AG04450 (cell line): ENCODE measurements at regions of chr10 and their contacts with region 1.

Region 1: DNA sequence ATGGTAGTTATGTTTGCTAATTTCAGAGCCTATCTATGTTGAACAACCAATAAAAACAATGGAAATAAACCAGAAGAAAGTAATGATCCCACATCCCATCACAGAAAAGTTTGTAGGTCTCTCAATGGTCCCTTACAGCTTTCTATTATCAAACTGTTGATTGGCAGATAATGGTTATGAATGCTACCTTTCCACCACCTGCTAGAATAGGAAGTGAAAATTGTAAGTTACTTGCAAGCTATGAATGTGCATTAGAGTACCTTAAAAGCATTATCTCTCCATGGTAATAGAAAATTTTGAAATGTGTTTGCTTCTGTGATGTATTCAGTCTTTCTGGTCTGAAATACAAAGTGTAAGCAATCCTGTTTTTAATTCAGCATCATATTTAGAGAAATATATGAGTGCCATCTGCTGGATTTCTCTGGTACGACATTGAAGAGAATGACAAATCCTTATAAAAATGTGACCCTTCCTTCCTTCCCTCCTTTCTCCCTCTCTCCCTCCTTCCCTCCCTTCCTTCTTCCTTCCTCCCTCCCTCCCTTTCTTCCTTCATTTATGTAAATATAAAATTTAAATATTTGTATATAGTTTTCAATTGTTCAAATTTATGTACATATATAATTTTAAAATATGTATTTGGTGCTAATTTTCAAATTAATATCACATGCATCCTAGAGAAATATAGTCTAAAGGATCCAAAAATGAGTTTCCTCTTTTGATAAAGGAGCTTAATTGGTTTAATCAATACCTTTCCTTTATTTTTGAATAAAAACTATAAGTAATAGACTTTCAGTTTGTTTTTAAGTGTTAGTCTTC is 41.4 kb upstream of the PNLIPRP3 start:
- DNase-seq: no peak
- H3K4me3 ChIP-seq: no peak overlapping the region
- H3K27ac ChIP-seq: no peak overlapping the region
- H3K27me3 ChIP-seq: no peaks in the 10 kb centered on the region
- CTCF ChIP-seq: peak; percentile 58

Region 2: GRCh38 chr10:115432188-115432775 is 953.9 kb before region 1 on chr10:
- CTCF ChIA-PET with region 1: interaction called, 27 read pairs
- POLR2A ChIA-PET with region 1: no interaction called
- DNase-seq: no peak
- H3K4me3 ChIP-seq: no peak overlapping the region
- H3K27ac ChIP-seq: no peak overlapping the region
- H3K27me3 ChIP-seq: no peaks in the 10 kb centered on the region
- CTCF ChIP-seq: peak; percentile 37

Region 3: DNA sequence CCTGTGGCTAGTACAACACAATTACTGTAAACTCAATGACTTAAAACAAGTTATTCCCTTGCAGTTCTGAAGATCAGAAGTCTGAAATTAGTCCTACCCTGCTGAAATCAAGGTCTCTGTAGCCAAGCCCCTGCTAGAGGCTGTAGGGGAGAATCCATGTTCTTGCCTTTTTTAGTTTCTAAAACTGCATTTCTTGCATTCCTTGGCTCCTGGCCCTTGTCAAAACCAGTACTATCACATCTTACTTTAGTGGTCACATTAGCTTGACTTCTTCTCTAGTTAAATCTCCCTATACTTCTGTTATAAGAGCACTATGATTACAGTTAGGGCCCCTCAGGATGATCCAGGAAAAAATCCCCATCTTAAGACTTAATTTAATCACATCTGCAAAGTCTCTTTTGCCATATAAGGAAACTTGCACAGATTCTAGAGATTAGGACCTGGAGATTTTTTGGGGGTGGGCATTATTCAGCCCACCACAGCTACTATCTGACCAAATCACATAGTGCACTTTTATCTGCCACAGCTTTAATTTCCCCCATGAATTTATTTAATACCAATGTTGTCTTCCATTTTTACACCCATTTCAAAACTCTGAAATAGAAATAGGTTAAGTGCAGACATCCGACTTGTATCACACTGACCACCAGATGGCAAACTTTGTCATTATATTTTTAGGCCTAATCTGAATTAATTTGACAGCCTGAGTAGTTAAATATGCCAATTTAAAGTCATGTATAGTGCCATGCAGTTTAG is 680.0 kb before region 1 on chr10:
- CTCF ChIA-PET with region 1: interaction called, 63 read pairs
- POLR2A ChIA-PET with region 1: no interaction called
- DNase-seq: no peak
- H3K4me3 ChIP-seq: no peak overlapping the region
- H3K27ac ChIP-seq: no peak overlapping the region
- H3K27me3 ChIP-seq: no peaks in the 10 kb centered on the region
- CTCF ChIP-seq: peak; percentile 57

Region 4: DNA sequence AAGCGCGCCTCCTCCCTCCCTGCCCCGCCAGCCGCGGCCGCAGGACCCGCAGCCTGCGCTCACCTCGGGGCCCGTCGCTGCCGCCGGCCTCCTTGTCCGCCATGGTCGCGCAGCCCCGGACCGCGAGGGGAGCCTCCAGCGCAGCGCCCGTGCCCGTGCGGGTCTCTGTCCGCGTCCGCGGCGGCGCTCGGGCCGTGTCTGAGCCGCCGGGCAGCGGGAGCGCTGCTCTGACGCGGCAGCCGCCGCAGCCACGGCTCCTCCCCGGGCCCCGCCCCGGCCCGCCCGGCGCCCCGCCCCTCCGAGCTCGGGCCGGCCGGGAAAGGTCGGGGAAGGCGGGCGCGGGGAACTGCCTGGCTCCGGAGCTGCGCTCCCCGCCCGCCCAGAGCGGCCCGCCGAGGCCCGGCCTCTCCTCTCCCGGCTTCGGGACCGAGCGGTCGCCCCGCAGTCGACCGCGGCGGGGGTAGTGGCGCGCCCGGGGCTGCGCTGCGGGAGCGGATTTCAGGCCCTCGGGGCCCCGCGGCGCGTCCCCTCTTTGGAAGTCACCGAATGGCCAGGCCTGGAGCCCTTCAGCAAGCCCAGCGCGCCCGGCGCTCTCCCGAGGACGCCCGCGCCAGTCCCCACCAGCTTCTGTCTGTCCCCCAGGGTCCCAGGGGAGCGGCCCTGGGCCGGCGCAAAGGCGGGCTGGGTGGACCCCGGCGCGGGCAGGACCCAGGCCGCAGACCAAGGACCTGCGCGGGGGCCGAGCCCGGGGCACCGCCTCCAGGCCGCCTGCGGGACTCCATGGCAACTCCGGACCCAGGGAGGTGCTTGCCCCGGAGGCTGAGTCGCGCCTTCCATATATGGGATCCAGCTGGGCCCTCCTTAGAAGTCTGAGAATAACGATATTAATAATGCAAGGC is 356.4 kb after region 1 on chr10 and contains the start of gene HSPA12A:
- CTCF ChIA-PET with region 1: no interaction called
- POLR2A ChIA-PET with region 1: no interaction called
- DNase-seq: peak; percentile 59
- H3K4me3 ChIP-seq: peak within 1 kb of the TSS; percentile 79
- H3K27ac ChIP-seq: peak within 1 kb of the TSS; percentile 65
- H3K27me3 ChIP-seq: no peaks in the 10 kb centered on the region
- CTCF ChIP-seq: no peak
- polyA plus RNA-seq, gene HSPA12A: 20.0 and 20.5 TPM in 2 replicates